Stomach (tissue), 19 donors: ENCODE measurements at regions of chr20 and their contacts with region 1.

Region 1: GRCh38 chr20:59042796-59043660 is 442 bp upstream of the PRELID3B start:
- DNase-seq: peak; percentile 96 to 98
- H3K4me3 ChIP-seq: peak overlapping the region; percentile 87 to 95 (median 90)
- H3K27ac ChIP-seq: peak overlapping the region; percentile 80 to 93 (median 90)
- H3K4me1 ChIP-seq: peaks cover 27 to 44% (median 37%) of the 10 kb centered on the region in 4 donors
- H3K27me3 ChIP-seq: no peaks in the 10 kb centered on the region
- CTCF ChIP-seq: no peak
- EP300 ChIP-seq: no peak
- POLR2A ChIP-seq: no peak

Region 2: DNA sequence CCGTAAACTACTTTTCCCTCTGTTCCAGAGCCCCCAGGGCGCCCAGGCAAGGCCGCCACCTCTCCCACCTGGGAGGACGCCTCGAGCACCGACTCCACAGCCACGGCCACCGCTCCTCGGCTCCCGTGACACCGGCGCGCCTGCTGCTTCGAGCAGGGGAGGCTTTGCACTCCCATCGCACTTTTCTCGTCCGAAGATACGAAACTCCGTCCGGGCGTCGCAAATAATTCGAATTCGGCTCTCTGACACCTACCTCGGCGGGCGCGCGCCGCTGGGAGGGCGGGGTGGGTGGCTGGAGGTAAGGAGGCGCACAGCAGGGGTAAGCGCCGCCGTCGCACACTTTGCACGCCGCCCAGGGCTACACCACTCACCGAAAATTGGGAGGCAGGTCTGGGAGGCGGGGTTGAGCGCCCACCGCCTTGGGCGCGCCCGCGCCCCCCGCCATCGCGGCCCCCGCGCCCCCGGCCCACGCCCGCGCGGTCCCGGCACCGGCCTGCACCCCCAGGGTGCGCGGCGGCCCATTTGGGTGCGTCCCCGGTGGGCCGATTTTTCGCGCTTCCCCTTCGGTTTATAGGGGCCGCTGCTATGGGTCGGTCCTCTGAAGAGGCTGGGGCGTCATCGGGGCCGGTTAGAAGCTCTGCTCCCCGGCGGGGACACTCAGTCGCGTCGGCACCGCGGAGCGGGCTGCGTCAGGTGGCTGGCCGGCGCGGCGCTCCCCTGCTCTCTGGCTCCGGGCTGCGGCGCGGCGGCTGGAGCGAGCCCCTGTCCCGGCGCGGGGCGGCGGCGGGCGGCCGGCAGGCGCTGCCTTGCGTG is 154.3 kb before region 1 on chr20:
- intact Hi-C with region 1: no loop called
- DNase-seq: peak; percentile 82 to 94
- H3K4me3 ChIP-seq: peak overlapping the region; percentile 68 to 89 (median 81)
- H3K27ac ChIP-seq: peak overlapping the region; percentile 98 to 100 (median 99)
- H3K4me1 ChIP-seq: peaks cover 10 to 20% (median 15%) of the 10 kb centered on the region in 4 donors
- H3K27me3 ChIP-seq: no peaks in the 10 kb centered on the region
- CTCF ChIP-seq: no peak
- EP300 ChIP-seq: no peak
- POLR2A ChIP-seq: peak in 1 of 4 donors; percentile 62

Region 3: GRCh38 chr20:58921564-58921963 is 121.5 kb before region 1 on chr20:
- intact Hi-C with region 1: no loop called
- DNase-seq: no peak
- H3K4me3 ChIP-seq: no peak overlapping the region
- H3K27ac ChIP-seq: no peak overlapping the region
- H3K4me1 ChIP-seq: no peaks in the 10 kb centered on the region
- H3K27me3 ChIP-seq: no peaks in the 10 kb centered on the region
- CTCF ChIP-seq: no peak
- EP300 ChIP-seq: no peak
- POLR2A ChIP-seq: no peak

Region 4: DNA sequence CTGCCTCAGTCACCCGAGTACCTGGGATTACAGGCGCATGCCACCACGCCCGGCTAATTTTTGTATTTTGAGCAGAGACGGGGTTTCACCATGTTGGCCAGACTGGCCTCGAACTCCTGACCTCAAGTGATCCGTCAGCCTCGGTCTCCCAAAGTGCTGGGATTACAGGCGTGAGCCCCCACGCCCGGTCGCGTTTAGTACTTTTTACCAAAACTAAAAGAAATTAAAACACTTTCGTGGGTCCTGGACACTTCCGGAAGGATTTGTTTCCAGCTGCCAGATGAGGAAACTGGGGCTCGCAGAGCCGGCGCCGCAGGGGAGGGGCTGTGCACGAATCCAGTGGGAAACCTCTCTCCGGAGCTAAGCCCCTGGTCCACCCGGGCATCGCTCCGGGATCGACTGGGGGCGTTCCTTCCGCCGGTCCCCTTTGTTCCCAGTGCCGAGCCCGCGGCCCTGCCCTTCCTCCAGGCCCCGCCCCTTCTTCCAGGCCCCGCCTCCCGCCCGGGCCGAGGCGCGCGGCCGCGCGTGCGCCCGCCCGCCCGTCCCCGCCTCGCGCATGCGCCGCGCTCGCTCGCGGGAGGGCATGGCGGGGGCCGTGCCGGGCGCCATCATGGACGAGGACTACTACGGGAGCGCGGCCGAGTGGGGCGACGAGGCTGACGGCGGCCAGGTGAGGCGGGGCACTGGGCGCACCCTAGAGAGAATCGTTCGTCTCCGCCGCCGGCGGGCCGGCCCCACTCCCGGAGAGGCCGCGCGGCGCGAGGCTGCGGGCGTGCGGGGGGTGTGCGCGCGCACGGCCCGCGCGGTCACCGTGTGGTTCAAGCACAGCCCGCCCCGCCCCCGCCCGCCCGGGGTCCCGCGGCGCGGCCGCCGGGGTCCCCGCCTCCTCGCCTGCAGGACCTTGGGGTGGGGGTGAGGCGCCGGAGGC is 62.1 kb before region 1 on chr20 and contains the start of gene NELFCD:
- intact Hi-C with region 1: loop called (anchors 10 kb)
- DNase-seq: peak; percentile 92 to 96
- H3K4me3 ChIP-seq: peak within 1 kb of the TSS; percentile 74 to 97 (median 82)
- H3K27ac ChIP-seq: peak within 1 kb of the TSS; percentile 84 to 95 (median 88)
- H3K4me1 ChIP-seq: peaks cover 14 to 43% (median 36%) of the 10 kb centered on the region in 4 donors
- H3K27me3 ChIP-seq: no peaks in the 10 kb centered on the region
- CTCF ChIP-seq: no peak
- EP300 ChIP-seq: no peak
- POLR2A ChIP-seq: no peak
- total RNA-seq, gene NELFCD: 20.9 to 59.5 (median 41.1) TPM

Region 5: DNA sequence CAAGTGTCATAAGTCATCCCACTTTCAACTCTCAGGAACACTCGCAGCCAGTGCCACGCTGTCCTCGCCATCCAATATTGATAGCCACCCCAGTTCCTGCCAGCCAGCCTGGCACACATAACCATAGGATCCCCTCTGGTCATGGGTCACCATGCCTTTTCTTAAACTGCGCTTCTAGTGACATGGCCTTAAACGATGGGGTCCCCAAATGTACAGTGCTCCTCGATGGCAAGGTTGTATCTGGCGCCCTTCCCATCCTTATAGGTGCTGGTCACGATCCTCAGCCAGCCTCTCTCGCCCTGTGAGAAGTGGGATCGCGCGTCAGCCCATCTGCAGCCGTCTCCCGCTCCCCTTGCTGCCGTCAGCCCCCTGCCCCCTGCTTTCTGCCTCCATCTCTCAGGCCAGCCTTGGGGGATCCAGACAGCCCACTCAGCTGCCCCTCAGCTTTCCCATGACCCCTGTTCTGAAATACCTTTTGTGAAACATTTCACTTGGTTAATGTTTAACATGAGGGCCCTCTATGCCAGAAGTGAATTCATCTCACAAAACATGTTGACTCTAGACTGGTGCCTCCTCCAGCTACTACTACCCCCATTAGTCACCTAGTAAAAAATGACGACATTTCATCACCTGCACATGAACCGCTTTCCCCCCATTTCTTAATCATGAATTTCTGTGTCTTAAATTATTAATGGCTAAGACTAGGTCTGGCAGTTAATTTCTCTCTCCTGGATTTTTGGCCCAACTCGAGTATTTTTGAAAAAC is 47.4 kb before region 1 on chr20:
- intact Hi-C with region 1: no loop called
- DNase-seq: peak in 1 of 2 donors; percentile 82
- H3K4me3 ChIP-seq: no peak overlapping the region
- H3K27ac ChIP-seq: peak overlapping the region in 1 of 5 donors; percentile 38
- H3K4me1 ChIP-seq: peaks cover 0 to 14% (median 8%) of the 10 kb centered on the region in 4 donors
- H3K27me3 ChIP-seq: no peaks in the 10 kb centered on the region
- CTCF ChIP-seq: no peak
- EP300 ChIP-seq: no peak
- POLR2A ChIP-seq: no peak

Region 6: GRCh38 chr20:59006864-59007664 is 36.0 kb before region 1 on chr20 and contains the start of gene CTSZ:
- intact Hi-C with region 1: loop called (anchors 5 kb)
- DNase-seq: peak; percentile 67 to 89
- H3K4me3 ChIP-seq: peak within 1 kb of the TSS; percentile 67 to 86 (median 77)
- H3K27ac ChIP-seq: peak within 1 kb of the TSS; percentile 72 to 90 (median 84)
- H3K4me1 ChIP-seq: peaks cover 28 to 74% (median 58%) of the 10 kb centered on the region in 4 donors
- H3K27me3 ChIP-seq: no peaks in the 10 kb centered on the region
- CTCF ChIP-seq: no peak
- EP300 ChIP-seq: no peak
- POLR2A ChIP-seq: no peak
- total RNA-seq, gene CTSZ: 35.3 to 134 (median 56.9) TPM